ENCODE measurements at regions of chr4 and their contacts with region 1.

Region 1: GRCh38 chr4:35066406-35066805 is 1177.9 kb downstream of the ARAP2 start:
- DNase-seq: no peak
- H3K4me3 ChIP-seq: no peak overlapping the region
- H3K27ac ChIP-seq: no peak overlapping the region
- H3K4me1 ChIP-seq: no peaks in the 10 kb centered on the region
- H3K27me3 ChIP-seq: no peaks in the 10 kb centered on the region
- CTCF ChIP-seq: no peak
- EP300 ChIP-seq: no peak
- POLR2A ChIP-seq: no peak

Region 2: DNA sequence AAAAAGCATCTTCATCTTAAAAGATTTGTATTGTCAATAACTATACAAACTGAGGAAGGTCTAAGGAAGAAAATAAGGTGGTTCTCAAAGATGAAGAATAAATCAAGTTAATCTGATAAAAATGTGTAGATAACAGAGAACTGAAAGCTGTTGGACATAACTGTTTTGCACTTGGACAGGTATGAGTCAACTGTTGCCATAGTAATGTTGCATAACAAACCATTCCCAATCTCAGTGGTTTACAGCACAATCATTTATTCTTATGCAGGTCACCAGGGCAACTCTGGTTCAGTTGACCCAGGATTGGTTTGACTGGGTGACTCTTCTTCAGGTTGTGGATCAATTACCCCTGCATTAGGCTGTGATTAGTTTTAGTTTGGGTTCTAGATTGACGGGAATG is 1019.8 kb before region 1 on chr4:
- in situ Hi-C with region 1: no loop called
- intact Hi-C with region 1: loop called (anchors 10 kb)
- DNase-seq: no peak
- H3K4me3 ChIP-seq: no peak overlapping the region
- H3K27ac ChIP-seq: no peak overlapping the region
- H3K4me1 ChIP-seq: no peaks in the 10 kb centered on the region
- H3K27me3 ChIP-seq: no peaks in the 10 kb centered on the region
- CTCF ChIP-seq: no peak
- EP300 ChIP-seq: no peak
- POLR2A ChIP-seq: no peak